Activated CD4-positive, alpha-beta memory T cell treated with anti-CD3 and anti-CD28 coated beads, Interleukin-2, amount 10 ng/mL, durations not matched to agents 7 days and 5 days (primary cell): ENCODE measurements at regions of chr16 and their contacts with region 1.

Region 1: DNA sequence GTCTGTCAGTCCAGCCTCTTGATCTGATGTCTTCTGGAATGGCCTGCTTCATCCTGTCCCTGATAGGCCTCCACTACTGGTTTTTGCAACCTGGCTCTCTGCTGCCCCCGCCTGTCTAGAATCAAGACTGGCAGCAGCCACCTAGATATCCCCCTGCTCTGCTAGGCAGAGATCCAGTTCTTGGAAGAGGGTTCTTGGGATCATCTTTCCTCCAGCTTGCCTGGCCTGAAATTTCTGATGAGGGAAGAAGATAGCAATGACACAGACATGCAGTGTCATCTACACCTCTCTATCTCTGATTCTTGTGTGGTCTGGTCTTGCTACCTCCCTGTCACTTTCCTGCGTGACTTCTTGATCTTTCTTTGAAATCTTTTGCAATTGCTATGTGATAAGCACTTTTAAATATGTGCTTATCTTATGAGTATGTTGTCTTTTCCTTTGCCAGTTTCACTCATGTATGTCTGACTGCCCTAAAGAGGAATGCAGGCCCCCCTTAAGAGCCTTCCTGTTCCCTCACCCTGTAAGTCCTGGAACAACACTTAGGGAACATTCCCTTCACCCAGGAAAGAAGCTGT is 20.3 kb upstream of the NFATC3 start:
- DNase-seq: peak; percentile 83
- H3K4me3 Mint-ChIP-seq: no peak overlapping the region
- H3K27ac Mint-ChIP-seq: peak overlapping the region; percentile 84
- H3K4me1 Mint-ChIP-seq: peaks cover 88% of the 10 kb centered on the region
- H3K27me3 Mint-ChIP-seq: no peaks in the 10 kb centered on the region

Region 2: DNA sequence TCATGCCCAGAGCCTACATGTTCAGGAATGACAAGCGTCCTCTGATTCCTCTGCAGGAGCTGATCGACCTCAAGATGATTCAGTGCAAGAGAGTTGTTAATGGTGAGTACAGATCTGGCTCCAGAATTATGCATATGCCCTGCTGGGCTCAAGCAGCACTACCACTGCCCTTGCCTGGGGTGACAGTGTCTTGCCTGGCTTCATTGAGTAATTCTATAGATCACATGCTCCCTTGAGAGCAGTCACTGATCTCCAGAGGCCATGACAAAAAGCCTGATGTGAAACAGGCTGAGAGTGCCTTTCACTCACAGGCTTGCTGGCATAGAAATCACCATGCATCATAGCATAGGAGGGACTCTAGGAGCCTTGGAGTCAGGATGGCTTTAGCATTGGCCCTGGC is 15.4 kb before region 1 on chr16:
- CTCF ChIA-PET with region 1: interaction called, 10 read pairs
- POLR2A ChIA-PET with region 1: no interaction called
- DNase-seq: no peak
- H3K4me3 Mint-ChIP-seq: no peak overlapping the region
- H3K27ac Mint-ChIP-seq: no peak overlapping the region
- H3K4me1 Mint-ChIP-seq: no peaks in the 10 kb centered on the region
- H3K27me3 Mint-ChIP-seq: no peaks in the 10 kb centered on the region

Region 3: GRCh38 chr16:68074850-68075555 is 10.1 kb after region 1 on chr16:
- CTCF ChIA-PET with region 1: interaction called, 42 read pairs
- POLR2A ChIA-PET with region 1: interaction called, 514 read pairs
- DNase-seq: peak; percentile 94
- H3K4me3 Mint-ChIP-seq: peak overlapping the region; percentile 58
- H3K27ac Mint-ChIP-seq: peak overlapping the region; percentile 95
- H3K4me1 Mint-ChIP-seq: peaks cover 89% of the 10 kb centered on the region
- H3K27me3 Mint-ChIP-seq: no peaks in the 10 kb centered on the region

Region 4: GRCh38 chr16:68100488-68100887 is 35.6 kb after region 1 on chr16:
- CTCF ChIA-PET with region 1: no interaction called
- POLR2A ChIA-PET with region 1: no interaction called
- DNase-seq: no peak
- H3K4me3 Mint-ChIP-seq: no peak overlapping the region
- H3K27ac Mint-ChIP-seq: no peak overlapping the region
- H3K4me1 Mint-ChIP-seq: peaks cover 63% of the 10 kb centered on the region
- H3K27me3 Mint-ChIP-seq: no peaks in the 10 kb centered on the region